ENCODE measurements at regions of chr12 and their contacts with region 1.

Region 1: DNA sequence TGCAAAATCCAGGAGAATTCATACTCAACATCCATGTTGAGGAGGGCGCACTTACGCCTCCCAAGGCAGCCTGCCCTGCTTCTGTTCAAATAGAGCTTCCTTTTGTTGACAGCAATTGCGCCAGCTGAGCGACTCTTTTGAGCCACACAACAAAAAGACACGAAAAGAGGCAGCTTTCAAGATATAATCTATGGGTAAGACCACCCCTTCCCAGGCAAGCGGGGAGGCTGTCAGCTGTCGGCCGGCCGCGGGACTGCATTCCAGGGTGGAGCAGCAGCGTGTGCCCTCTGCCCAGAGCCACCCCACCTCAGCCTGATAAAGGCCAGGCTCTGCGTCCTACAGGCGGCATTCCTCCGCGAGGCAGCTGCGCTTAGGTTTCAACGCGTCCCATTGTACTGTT is 15.8 kb upstream of the STAB2 start:
- DNase-seq: no peak
- ATAC-seq: no peak
- H3K4me3 Mint-ChIP-seq: no peak overlapping the region
- H3K27ac Mint-ChIP-seq: no peak overlapping the region
- H3K4me1 Mint-ChIP-seq: no peaks in the 10 kb centered on the region
- H3K27me3 Mint-ChIP-seq: peaks cover 52% of the 10 kb centered on the region

Region 2: DNA sequence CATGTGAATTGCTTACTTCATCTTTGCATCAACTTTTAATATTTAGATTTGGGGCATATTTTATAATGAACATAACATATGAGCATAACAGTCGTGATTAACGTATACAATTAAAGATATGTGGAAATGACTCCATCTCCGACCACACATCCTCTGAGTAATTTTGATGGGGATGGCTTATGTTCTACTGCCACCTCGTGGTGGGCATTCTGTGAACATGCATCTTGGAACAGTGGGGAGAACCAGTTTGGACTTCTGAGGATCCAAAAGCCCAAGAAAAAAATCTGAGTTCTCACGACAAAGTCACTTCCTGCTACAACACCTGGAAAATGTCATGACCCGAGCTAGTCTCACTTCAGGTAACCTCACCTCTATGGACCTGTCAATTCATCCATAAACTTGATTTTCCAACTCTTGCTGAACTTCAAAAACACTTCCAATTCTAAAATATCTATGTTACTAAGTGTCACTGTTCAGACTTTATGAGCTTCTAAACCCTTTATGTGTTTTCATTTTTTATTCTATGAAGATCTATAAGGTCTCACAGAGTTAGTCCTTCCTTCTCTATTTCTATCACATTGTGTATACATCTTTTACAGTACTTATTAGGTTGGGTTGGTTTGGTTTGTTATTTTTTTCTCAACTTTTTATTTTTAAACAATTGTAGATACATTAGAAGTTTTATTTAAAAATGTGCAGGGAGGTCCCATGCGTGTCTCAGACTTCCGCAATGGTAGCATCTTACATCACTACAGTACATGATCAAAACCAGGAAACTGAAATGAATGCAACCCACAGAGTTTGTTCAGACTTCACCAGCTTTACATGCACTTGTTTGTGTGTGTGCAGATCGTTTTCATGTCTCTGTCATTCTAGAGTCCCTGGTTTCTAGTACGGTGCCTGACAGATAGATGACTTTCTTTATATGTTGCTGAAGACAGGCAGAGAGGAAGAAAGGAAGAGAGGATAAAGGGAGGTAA is 22.4 kb before region 1 on chr12:
- CTCF ChIA-PET with region 1: no interaction called
- POLR2A ChIA-PET with region 1: no interaction called
- intact Hi-C with region 1: no loop called
- DNase-seq: peak; percentile 85
- ATAC-seq: peak; percentile 79
- H3K4me3 Mint-ChIP-seq: no peak overlapping the region
- H3K27ac Mint-ChIP-seq: no peak overlapping the region
- H3K4me1 Mint-ChIP-seq: peaks cover 5% of the 10 kb centered on the region
- H3K27me3 Mint-ChIP-seq: peaks cover 17% of the 10 kb centered on the region

Region 3: GRCh38 chr12:103632554-103633216 is 61.4 kb after region 1 on chr12:
- CTCF ChIA-PET with region 1: interaction called, 7 read pairs
- POLR2A ChIA-PET with region 1: no interaction called
- intact Hi-C with region 1: loop called (anchors 1 to 10 kb)
- DNase-seq: peak; percentile 82
- ATAC-seq: peak; percentile 69
- H3K4me3 Mint-ChIP-seq: no peak overlapping the region
- H3K27ac Mint-ChIP-seq: no peak overlapping the region
- H3K4me1 Mint-ChIP-seq: no peaks in the 10 kb centered on the region
- H3K27me3 Mint-ChIP-seq: no peaks in the 10 kb centered on the region

Region 4: GRCh38 chr12:103868215-103868614 is 296.9 kb after region 1 on chr12:
- CTCF ChIA-PET with region 1: no interaction called
- POLR2A ChIA-PET with region 1: no interaction called
- intact Hi-C with region 1: loop called in 1 of 2 experiments (anchors 1 kb)
- DNase-seq: no peak
- ATAC-seq: no peak
- H3K4me3 Mint-ChIP-seq: no peak overlapping the region
- H3K27ac Mint-ChIP-seq: no peak overlapping the region
- H3K4me1 Mint-ChIP-seq: no peaks in the 10 kb centered on the region
- H3K27me3 Mint-ChIP-seq: no peaks in the 10 kb centered on the region

Measured in activated CD4-positive, alpha-beta T cell treated with anti-CD3 and anti-CD28 coated beads for 36 hours (primary cell).